Posterior vena cava (tissue), 2 donors: ENCODE measurements at regions of chr11 and their contacts with region 1.

Region 1: GRCh38 chr11:1335811-1336761 is 26.7 kb upstream of the TOLLIP start:
- DNase-seq: peak; percentile 91

Region 2: GRCh38 chr11:680476-680875 is 655.6 kb before region 1 on chr11:
- intact Hi-C with region 1: no loop called
- DNase-seq: no peak

Region 3: GRCh38 chr11:1281326-1281973 is 54.6 kb before region 1 on chr11:
- intact Hi-C with region 1: no loop called
- DNase-seq: no peak

Region 4: GRCh38 chr11:2256923-2257716 is 921.0 kb after region 1 on chr11:
- intact Hi-C with region 1: loop called in 1 of 2 experiments (anchors 10 kb)
- DNase-seq: no peak